ENCODE measurements at regions of chr6 and their contacts with region 1.

Region 1: DNA sequence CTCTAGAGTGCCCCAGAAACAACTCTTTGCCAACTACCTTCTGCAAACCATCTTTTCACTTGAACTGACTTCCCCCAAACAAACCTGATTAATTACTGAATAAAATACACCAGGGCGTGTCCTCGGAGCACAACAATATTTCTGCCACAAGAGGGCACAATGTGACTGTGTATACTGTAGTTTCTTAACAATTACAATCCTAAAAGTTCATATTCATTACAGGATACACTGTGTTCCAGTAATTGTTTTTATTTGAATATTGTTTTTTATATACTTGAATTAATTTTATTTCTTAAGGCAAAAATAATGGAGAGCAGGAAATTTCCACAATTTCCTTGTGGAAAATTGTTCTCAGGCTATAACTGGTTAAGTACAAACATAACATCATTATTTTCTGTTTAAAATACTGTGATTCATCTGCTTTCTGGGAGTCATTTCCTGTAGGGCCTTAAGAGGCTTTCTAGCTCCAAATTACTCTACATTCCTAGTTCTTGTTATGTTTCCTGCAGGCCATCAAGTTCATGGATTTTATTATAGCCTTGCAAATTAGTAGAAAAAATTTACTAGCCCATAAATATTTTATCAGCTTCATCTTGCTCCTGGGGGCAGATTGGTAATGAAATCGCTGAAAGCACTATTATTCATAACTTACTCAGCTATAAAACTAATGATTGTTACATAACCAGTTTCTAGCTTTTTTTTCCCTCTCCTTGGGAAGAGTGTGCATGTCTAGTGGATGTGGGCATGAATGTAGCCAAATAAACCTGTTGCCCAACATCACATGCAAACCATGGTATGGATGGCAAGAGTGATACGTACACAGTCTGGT is 51.9 kb upstream of the SLC22A16 start:
- DNase-seq: peak; percentile 91
- H3K4me3 ChIP-seq: no peak overlapping the region
- H3K27ac ChIP-seq: peak overlapping the region; percentile 54
- H3K4me1 ChIP-seq: peaks cover 27% of the 10 kb centered on the region
- H3K27me3 ChIP-seq: peaks cover 29 to 30% of the 10 kb centered on the region in 2 experiments
- CTCF ChIP-seq: peak; percentile 45 to 68
- POLR2A ChIP-seq: no peak

Region 2: GRCh38 chr6:110378552-110378951 is 149.8 kb before region 1 on chr6:
- CTCF ChIA-PET with region 1: no interaction called
- POLR2A ChIA-PET with region 1: no interaction called
- dilution Hi-C with region 1: no loop called
- intact Hi-C with region 1: no loop called
- DNase-seq: no peak
- H3K4me3 ChIP-seq: no peak overlapping the region
- H3K27ac ChIP-seq: no peak overlapping the region
- H3K4me1 ChIP-seq: no peaks in the 10 kb centered on the region
- H3K27me3 ChIP-seq: peaks cover 3 to 12% of the 10 kb centered on the region in 2 experiments
- CTCF ChIP-seq: no peak
- POLR2A ChIP-seq: no peak

Region 3: DNA sequence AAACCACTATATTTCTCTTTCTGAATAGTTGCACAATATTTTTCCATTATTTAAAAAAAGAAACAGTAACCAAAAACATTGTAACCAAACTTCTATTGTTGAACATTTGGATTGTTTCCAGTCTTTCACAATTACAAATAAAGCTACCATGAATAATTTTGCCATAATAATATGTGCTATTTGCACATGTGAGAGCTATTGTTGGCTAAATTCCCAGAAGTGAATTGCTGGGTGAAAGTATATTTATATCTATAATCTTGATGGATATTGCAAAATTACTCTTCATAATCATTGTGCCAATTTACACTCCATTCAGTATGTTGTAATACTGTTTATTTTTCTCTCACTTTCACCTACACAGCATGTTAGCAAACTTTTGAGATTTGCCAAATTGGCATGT is 15.3 kb before region 1 on chr6:
- CTCF ChIA-PET with region 1: interaction called, 23 read pairs
- POLR2A ChIA-PET with region 1: no interaction called
- dilution Hi-C with region 1: no loop called
- intact Hi-C with region 1: loop called (anchors 1 kb)
- DNase-seq: peak; percentile 84
- H3K4me3 ChIP-seq: no peak overlapping the region
- H3K27ac ChIP-seq: no peak overlapping the region
- H3K4me1 ChIP-seq: peaks cover 27% of the 10 kb centered on the region
- H3K27me3 ChIP-seq: peaks cover 13 to 26% of the 10 kb centered on the region in 2 experiments
- CTCF ChIP-seq: no peak
- POLR2A ChIP-seq: no peak

Region 4: GRCh38 chr6:110815217-110816109 is 287.1 kb after region 1 on chr6 and contains the start of gene CDK19:
- CTCF ChIA-PET with region 1: no interaction called
- POLR2A ChIA-PET with region 1: no interaction called
- dilution Hi-C with region 1: no loop called
- intact Hi-C with region 1: loop called (anchors 1 kb)
- DNase-seq: peak; percentile 99
- H3K4me3 ChIP-seq: peak within 1 kb of the TSS; percentile 66 to 97 (median 76)
- H3K27ac ChIP-seq: peak within 1 kb of the TSS; percentile 68
- H3K4me1 ChIP-seq: peaks cover 9% of the 10 kb centered on the region
- H3K27me3 ChIP-seq: peaks cover 0 to 2% of the 10 kb centered on the region in 2 experiments
- CTCF ChIP-seq: no peak
- POLR2A ChIP-seq: peak; percentile 76
- total RNA-seq, gene CDK19: 11.9 and 12.1 TPM in 2 replicates

Region 5: DNA sequence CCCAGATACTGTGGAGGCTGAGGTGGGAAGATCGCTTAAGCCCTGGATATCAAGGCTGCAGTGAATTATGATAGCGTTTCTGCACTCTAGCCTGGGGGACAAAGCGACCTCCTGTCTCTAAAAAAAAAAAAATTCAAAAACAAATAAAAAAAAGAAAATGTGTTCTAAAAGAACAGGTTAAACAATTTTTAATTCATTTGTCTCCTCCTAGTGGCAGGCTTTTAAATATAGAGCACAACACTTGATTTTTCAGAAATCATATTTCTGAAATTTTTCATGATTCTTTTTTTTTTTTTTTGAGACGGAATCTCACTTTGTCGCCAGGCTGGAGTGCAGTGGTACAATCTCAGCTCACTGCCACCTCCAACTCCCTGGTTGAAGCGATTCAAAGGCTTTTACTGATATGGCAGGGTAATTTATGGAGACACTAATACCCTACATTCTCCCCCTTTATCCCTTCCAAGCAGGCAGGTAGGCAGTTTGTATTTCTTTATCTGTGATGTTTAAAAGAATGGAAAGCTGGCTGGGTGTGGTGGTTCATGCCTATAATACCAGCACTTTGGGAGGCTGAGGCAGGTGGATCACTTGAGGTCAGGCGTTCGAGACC is 421.5 kb after region 1 on chr6:
- CTCF ChIA-PET with region 1: interaction called, 9 read pairs
- POLR2A ChIA-PET with region 1: no interaction called
- dilution Hi-C with region 1: no loop called
- intact Hi-C with region 1: loop called (anchors 1 kb)
- DNase-seq: peak; percentile 41
- H3K4me3 ChIP-seq: no peak overlapping the region
- H3K27ac ChIP-seq: no peak overlapping the region
- H3K4me1 ChIP-seq: no peaks in the 10 kb centered on the region
- H3K27me3 ChIP-seq: peaks cover 0 to 3% of the 10 kb centered on the region in 2 experiments
- CTCF ChIP-seq: peak in 1 of 2 donors; percentile 26
- POLR2A ChIP-seq: no peak

Region 6: GRCh38 chr6:110999634-111000270 is 471.4 kb after region 1 on chr6:
- CTCF ChIA-PET with region 1: interaction called, 8 read pairs
- POLR2A ChIA-PET with region 1: no interaction called
- dilution Hi-C with region 1: no loop called
- intact Hi-C with region 1: loop called (anchors 1 kb)
- DNase-seq: peak; percentile 59
- H3K4me3 ChIP-seq: no peak overlapping the region
- H3K27ac ChIP-seq: no peak overlapping the region
- H3K4me1 ChIP-seq: no peaks in the 10 kb centered on the region
- H3K27me3 ChIP-seq: no peaks in the 10 kb centered on the region
- CTCF ChIP-seq: peak in 1 of 2 donors; percentile 10
- POLR2A ChIP-seq: no peak

Region 7: GRCh38 chr6:111259089-111259831 is 730.9 kb after region 1 on chr6:
- CTCF ChIA-PET with region 1: no interaction called
- POLR2A ChIA-PET with region 1: no interaction called
- dilution Hi-C with region 1: no loop called
- intact Hi-C with region 1: loop called (anchors 5 kb)
- DNase-seq: peak; percentile 99
- H3K4me3 ChIP-seq: peak overlapping the region; percentile 41 to 68 (median 47)
- H3K27ac ChIP-seq: peak overlapping the region; percentile 55
- H3K4me1 ChIP-seq: peaks cover 11% of the 10 kb centered on the region
- H3K27me3 ChIP-seq: peaks cover 11 to 25% of the 10 kb centered on the region in 2 experiments
- CTCF ChIP-seq: peak; percentile 89 to 98
- POLR2A ChIP-seq: peak; percentile 81